Activated CD4-positive, alpha-beta T cell treated with anti-CD3 and anti-CD28 coated beads, Interleukin-2, amount 10 ng/mL, durations not matched to agents 24 days and 14 days (primary cell): ENCODE measurements at regions of chr3 and their contacts with region 1.

Region 1: GRCh38 chr3:47164007-47164881 is at the start of gene SETD2:
- DNase-seq: peak; percentile 94
- H3K4me3 Mint-ChIP-seq: peak within 1 kb of the TSS; percentile 94
- H3K27ac Mint-ChIP-seq: peak within 1 kb of the TSS; percentile 98
- H3K4me1 Mint-ChIP-seq: peaks cover 46% of the 10 kb centered on the region
- H3K27me3 Mint-ChIP-seq: no peaks in the 10 kb centered on the region
- total RNA-seq, gene SETD2: 41.5 and 42.0 TPM in 2 replicates

Region 2: DNA sequence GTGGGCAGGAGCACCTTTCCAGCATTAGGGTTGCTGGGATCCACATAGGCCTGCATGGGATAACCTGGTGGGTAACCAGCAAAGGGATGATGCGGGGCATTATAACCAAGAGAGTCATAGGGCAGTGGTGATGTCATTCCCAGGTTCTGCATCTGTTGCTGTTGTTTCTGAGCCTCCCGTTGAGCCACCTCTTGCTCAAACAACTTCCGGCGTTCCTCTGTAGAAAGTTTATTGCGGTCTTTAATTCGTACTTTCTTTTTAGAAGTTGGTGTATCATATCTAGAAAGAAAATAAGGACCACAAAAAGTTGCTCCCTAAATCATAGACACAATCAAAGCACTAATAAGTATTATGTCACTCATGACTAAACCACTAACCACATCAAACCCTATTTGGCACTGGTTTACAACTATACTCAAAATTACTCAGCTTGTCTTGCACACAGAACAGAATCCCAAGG is 107.0 kb before region 1 on chr3:
- intact Hi-C with region 1: loop called (anchors 5 kb)
- DNase-seq: peak; percentile 85
- H3K4me3 Mint-ChIP-seq: peak overlapping the region; percentile 29
- H3K27ac Mint-ChIP-seq: peak overlapping the region; percentile 78
- H3K4me1 Mint-ChIP-seq: peaks cover 30% of the 10 kb centered on the region
- H3K27me3 Mint-ChIP-seq: no peaks in the 10 kb centered on the region

Region 3: DNA sequence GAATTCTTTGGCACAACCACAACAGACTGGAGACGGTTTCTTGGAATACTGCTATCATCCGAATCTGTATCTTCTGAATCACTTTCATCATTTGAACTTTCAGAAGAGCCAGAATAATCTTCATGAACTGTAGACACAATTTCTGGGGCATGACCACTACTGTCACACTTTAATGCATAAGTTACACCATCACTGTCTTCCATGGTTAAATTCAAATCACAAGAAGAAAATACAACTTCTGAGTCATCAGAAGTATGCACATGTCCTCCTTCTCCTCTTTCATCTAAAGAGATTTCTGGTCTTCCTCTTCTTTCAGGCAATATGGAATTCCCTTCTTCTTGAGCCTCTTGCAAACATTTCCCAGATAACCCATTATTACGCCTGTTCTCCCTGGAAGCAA is 42.8 kb before region 1 on chr3:
- intact Hi-C with region 1: loop called (anchors 5 kb)
- DNase-seq: no peak
- H3K4me3 Mint-ChIP-seq: no peak overlapping the region
- H3K27ac Mint-ChIP-seq: peak overlapping the region; percentile 3
- H3K4me1 Mint-ChIP-seq: peaks cover 35% of the 10 kb centered on the region
- H3K27me3 Mint-ChIP-seq: no peaks in the 10 kb centered on the region

Region 4: GRCh38 chr3:47152578-47152977 is 11.7 kb before region 1 on chr3:
- intact Hi-C with region 1: no loop called
- DNase-seq: no peak
- H3K4me3 Mint-ChIP-seq: no peak overlapping the region
- H3K27ac Mint-ChIP-seq: no peak overlapping the region
- H3K4me1 Mint-ChIP-seq: peaks cover 35% of the 10 kb centered on the region
- H3K27me3 Mint-ChIP-seq: no peaks in the 10 kb centered on the region

Region 5: GRCh38 chr3:47210863-47211405 is 46.7 kb after region 1 on chr3:
- intact Hi-C with region 1: no loop called
- DNase-seq: no peak
- H3K4me3 Mint-ChIP-seq: no peak overlapping the region
- H3K27ac Mint-ChIP-seq: no peak overlapping the region
- H3K4me1 Mint-ChIP-seq: no peaks in the 10 kb centered on the region
- H3K27me3 Mint-ChIP-seq: no peaks in the 10 kb centered on the region

Region 6: GRCh38 chr3:47282424-47283192 is 118.4 kb after region 1 on chr3 and contains the starts of genes KIF9 and KLHL18:
- intact Hi-C with region 1: loop called (anchors 1 kb)
- DNase-seq: peak; percentile 98
- H3K4me3 Mint-ChIP-seq: peak within 1 kb of the TSS; percentile 100
- H3K27ac Mint-ChIP-seq: peak within 1 kb of the TSS; percentile 100
- H3K4me1 Mint-ChIP-seq: peaks cover 29% of the 10 kb centered on the region
- H3K27me3 Mint-ChIP-seq: peaks cover 3% of the 10 kb centered on the region
- total RNA-seq, gene KIF9: 3.0 and 3.6 TPM in 2 replicates
- total RNA-seq, gene KLHL18: 47.0 and 49.3 TPM in 2 replicates